Heart left ventricle (tissue), 16 donors: ENCODE measurements at regions of chr3 and their contacts with region 1.

Region 1: GRCh38 chr3:25594007-25594502 is 70.7 kb downstream of the TOP2B start:
- DNase-seq: no peak
- ATAC-seq: peak in 3 of 4 donors; percentile 42 to 65 (median 51)
- H3K4me3 ChIP-seq: no peak overlapping the region
- H3K27ac ChIP-seq: peak overlapping the region in 10 of 12 donors; percentile 11 to 74 (median 54)
- H3K4me1 ChIP-seq: peaks cover 0 to 46% (median 34%) of the 10 kb centered on the region in 12 donors
- H3K27me3 ChIP-seq: no peaks in the 10 kb centered on the region
- CTCF ChIP-seq: peak; percentile 71 to 94 (median 82)
- POLR2A ChIP-seq: no peak

Region 2: DNA sequence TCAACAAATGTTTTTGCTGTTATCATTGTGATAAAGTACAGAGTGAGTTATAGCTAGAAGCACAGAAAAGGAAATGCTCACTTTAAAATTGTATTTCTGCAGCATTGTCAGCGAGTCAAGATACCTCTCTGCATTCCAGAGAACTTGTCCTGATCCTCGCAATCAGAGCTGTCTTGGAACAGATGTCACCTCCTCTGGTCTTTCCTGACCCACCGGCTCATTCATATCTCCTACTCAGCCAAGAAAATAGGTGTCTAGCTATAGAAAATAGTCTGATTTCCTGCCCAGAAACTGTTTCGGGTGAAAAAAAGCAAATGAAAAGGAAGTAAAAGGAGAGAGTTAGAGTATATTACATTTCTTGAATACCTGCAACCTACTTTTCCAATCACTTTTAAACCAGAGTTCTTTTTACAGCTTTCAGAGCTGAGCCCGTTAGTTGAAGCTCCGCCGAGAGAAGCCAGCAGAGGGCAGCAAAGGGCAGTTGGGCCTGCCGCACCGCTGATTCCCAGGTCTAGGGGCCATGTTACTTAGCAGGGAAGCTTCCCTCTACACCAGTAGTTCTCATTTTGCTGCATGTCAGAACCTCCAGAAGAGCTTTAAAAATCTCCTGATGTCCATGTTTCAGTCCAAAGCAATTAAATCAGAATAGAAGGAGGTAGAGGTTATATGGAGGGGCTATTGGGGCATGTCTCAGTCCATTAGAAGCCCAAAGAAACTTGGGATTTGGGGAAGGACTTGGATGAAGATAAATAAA is 913.7 kb before region 1 on chr3:
- intact Hi-C with region 1: loop called in 1 of 10 experiments (anchors 5 kb)
- DNase-seq: peak; percentile 46 to 82 (median 54)
- ATAC-seq: peak; percentile 37 to 86 (median 67)
- H3K4me3 ChIP-seq: no peak overlapping the region
- H3K27ac ChIP-seq: no peak overlapping the region
- H3K4me1 ChIP-seq: peaks cover 0 to 8% (median 0%) of the 10 kb centered on the region in 12 donors
- H3K27me3 ChIP-seq: no peaks in the 10 kb centered on the region
- CTCF ChIP-seq: peak; percentile 70 to 92 (median 83)
- POLR2A ChIP-seq: no peak

Region 3: DNA sequence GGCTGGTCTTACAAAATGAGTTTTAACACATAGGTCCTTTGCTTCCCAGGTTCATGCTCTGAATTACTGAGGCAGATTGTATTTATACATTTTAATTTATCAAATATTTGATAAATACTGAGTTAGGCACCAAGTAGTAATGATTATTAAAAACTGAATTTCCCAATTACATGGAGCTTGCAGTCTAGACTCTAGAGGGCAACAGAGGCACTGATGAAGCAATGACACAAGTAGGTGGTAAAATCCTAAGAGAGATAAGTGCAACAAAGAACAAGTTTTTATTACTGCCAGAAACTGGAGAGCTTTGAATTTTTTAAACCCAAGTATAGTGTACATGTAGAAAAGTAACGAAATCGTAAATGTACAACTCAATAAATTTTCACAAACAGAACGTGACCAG is 572.2 kb before region 1 on chr3:
- intact Hi-C with region 1: loop called in 9 of 10 experiments (anchors 5 to 10 kb)
- DNase-seq: no peak
- ATAC-seq: peak in 1 of 4 donors; percentile 61
- H3K4me3 ChIP-seq: no peak overlapping the region
- H3K27ac ChIP-seq: no peak overlapping the region
- H3K4me1 ChIP-seq: no peaks in the 10 kb centered on the region
- H3K27me3 ChIP-seq: no peaks in the 10 kb centered on the region
- CTCF ChIP-seq: peak; percentile 33 to 69 (median 60)
- POLR2A ChIP-seq: no peak

Region 4: DNA sequence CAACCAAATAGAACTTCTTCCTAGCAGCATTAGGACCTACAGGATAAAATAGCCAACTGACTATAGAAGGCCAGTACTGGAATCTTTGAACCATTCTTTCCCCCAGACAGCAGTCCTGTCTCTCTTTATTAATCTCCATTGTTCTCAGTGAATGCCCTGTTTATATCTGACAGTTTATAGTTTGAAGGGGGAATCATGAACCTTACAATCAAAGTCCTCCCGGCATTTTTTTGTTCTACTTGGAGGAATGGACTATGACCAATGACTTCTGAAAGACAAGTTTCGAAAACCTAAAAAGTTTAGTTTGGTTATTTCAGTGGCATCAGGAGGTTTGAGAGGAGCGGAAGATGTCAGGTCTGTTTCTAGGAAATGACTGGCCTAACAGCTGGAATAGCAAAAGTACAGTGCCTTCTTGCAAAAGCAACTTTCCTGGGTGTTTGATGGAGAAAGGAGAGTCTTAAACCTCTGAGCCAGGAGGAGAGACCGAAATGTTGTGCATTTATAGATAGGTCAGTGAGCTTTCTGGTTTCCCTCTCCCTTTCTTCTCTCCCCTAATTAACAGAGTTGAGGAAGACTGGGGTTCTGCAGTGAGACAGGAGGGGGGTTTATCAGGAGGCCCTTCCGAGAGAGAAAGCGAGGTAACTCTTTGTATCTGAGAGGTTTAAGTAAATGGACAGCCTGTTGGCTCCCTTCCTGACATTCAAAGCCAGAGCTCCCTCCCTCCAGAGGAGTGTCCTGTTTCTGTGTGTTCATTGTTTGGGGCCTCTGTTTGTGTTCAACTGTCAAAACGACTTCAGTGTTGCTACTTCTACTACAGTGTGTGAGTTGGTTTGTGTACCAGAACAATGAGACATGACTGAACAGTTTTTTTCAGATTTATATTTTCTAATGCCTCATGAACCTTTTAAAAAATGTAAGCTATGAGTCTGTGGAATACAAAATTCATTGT is 549.0 kb before region 1 on chr3:
- intact Hi-C with region 1: loop called in 1 of 10 experiments (anchors 5 kb)
- DNase-seq: peak in 3 of 5 donors; percentile 30 to 39 (median 31)
- ATAC-seq: peak; percentile 86 to 91 (median 88)
- H3K4me3 ChIP-seq: no peak overlapping the region
- H3K27ac ChIP-seq: peak overlapping the region in 10 of 12 donors; percentile 6 to 59 (median 21)
- H3K4me1 ChIP-seq: peaks cover 0 to 57% (median 22%) of the 10 kb centered on the region in 12 donors
- H3K27me3 ChIP-seq: no peaks in the 10 kb centered on the region
- CTCF ChIP-seq: no peak
- POLR2A ChIP-seq: no peak

Region 5: GRCh38 chr3:25427942-25428788 is 165.9 kb before region 1 on chr3 and contains the start of gene RARB:
- intact Hi-C with region 1: loop called (anchors 1 to 5 kb)
- DNase-seq: peak; percentile 72 to 85 (median 81)
- ATAC-seq: peak; percentile 85 to 95 (median 92)
- H3K4me3 ChIP-seq: peak within 1 kb of the TSS; percentile 55 to 78 (median 62)
- H3K27ac ChIP-seq: peak within 1 kb of the TSS; percentile 86 to 98 (median 93)
- H3K4me1 ChIP-seq: peaks cover 0 to 27% (median 13%) of the 10 kb centered on the region in 12 donors
- H3K27me3 ChIP-seq: peaks cover 0 to 9% (median 0%) of the 10 kb centered on the region in 9 donors
- CTCF ChIP-seq: no peak
- POLR2A ChIP-seq: peak; percentile 55 to 96
- total RNA-seq, gene RARB: 11.3 to 21.0 (median 17.3) TPM

Region 6: DNA sequence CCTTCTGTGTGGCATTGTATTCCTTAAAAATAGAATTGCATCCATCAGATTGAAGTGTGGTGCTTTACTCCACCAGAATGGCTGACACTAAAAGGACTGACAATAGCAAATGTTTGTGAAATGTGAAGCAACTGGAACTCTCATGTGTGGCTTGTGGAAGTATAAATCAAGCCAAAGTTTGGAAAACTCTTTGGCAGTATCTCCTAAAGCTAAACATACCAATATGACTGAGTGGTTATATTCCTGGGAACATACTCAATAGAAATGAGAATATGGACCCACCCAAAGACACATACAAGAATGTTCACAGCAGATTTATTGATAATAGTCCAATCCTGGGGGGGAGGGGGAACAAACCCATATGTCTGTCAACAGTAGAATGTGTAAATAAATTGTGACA is 78.9 kb before region 1 on chr3:
- intact Hi-C with region 1: loop called in 2 of 10 experiments (anchors 5 to 10 kb)
- DNase-seq: no peak
- ATAC-seq: no peak
- H3K4me3 ChIP-seq: no peak overlapping the region
- H3K27ac ChIP-seq: peak overlapping the region in 9 of 12 donors; percentile 5 to 87 (median 73)
- H3K4me1 ChIP-seq: peaks cover 0 to 65% (median 13%) of the 10 kb centered on the region in 12 donors
- H3K27me3 ChIP-seq: no peaks in the 10 kb centered on the region
- CTCF ChIP-seq: no peak
- POLR2A ChIP-seq: no peak